PC-3 (cell line): ENCODE measurements at regions of chr1 and their contacts with region 1.

Region 1: DNA sequence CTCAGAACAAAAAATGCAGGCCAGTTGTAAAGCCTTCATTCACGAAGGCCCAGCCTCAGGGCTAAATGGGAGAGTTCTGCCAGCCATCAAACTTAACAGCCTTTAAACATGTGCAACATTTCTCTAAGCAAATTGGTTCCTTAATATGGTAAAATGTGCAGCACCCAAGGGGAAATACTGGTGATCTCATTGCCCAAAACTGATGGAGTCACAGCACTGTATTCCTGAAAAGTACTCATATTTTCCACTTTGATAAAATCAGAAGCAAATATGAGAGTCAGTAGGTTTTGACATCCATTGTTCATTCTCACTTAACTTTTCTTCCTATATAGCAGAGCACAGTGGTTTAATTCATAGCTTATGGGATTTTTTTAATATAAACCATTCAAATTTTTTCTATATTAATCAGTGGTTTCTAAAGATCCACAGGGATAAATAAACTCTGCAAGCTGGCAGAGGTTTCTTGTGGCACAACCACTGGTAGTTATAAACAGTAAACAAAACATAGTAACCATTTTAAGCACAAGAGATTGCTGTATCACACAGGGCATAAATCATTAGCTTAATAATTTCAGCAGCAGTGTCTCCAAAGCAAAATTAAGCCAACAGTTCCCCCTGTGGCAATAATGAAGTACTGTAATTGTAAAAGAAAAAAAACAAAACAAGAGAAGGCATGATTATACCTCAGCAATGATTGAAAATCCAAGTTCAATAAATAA is 106.9 kb upstream of the LYPLAL1 start:
- DNase-seq: peak; percentile 88
- ATAC-seq: peak; percentile 84
- H3K4me3 ChIP-seq: no peak overlapping the region
- H3K27ac ChIP-seq: peak overlapping the region; percentile 61
- H3K4me1 ChIP-seq: peaks cover 17% of the 10 kb centered on the region
- H3K27me3 ChIP-seq: no peaks in the 10 kb centered on the region
- CTCF ChIP-seq: peak; percentile 97

Region 2: GRCh38 chr1:218339267-218339831 is 727.4 kb before region 1 on chr1:
- CTCF ChIA-PET with region 1: interaction called, 14 read pairs
- POLR2A ChIA-PET with region 1: no interaction called
- intact Hi-C with region 1: loop called (anchors 1 kb)
- DNase-seq: peak; percentile 88
- ATAC-seq: peak; percentile 63
- H3K4me3 ChIP-seq: no peak overlapping the region
- H3K27ac ChIP-seq: peak overlapping the region; percentile 6
- H3K4me1 ChIP-seq: peaks cover 18% of the 10 kb centered on the region
- H3K27me3 ChIP-seq: no peaks in the 10 kb centered on the region
- CTCF ChIP-seq: peak; percentile 98

Region 3: DNA sequence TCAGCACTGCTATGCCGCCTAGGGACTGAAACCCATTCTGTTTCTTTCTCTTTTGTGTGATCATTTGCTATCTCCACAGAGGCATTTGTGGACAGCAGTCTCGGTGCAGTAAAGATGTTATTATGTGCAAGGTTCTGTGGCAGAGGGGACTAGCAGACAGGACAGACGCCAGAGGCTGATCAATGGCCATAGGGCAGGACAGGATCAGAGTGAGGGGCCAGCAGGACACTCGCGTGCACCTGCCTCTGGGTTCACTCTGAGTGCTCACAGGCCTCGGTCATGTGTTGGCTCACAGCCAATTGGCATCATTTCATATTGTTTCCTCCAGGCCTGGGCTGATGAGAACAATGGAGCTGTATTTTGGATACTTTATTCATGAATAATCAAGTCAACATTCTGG is 509.1 kb before region 1 on chr1:
- CTCF ChIA-PET with region 1: no interaction called
- POLR2A ChIA-PET with region 1: no interaction called
- intact Hi-C with region 1: loop called (anchors 2 kb)
- DNase-seq: peak; percentile 93
- ATAC-seq: peak; percentile 83
- H3K4me3 ChIP-seq: no peak overlapping the region
- H3K27ac ChIP-seq: no peak overlapping the region
- H3K4me1 ChIP-seq: peaks cover 11% of the 10 kb centered on the region
- H3K27me3 ChIP-seq: no peaks in the 10 kb centered on the region
- CTCF ChIP-seq: no peak

Region 4: GRCh38 chr1:218705911-218706893 is 360.6 kb before region 1 on chr1:
- CTCF ChIA-PET with region 1: interaction called, 13 read pairs
- POLR2A ChIA-PET with region 1: no interaction called
- intact Hi-C with region 1: loop called (anchors 1 kb)
- DNase-seq: peak; percentile 100
- ATAC-seq: peak; percentile 85
- H3K4me3 ChIP-seq: no peak overlapping the region
- H3K27ac ChIP-seq: peak overlapping the region; percentile 88
- H3K4me1 ChIP-seq: peaks cover 42% of the 10 kb centered on the region
- H3K27me3 ChIP-seq: no peaks in the 10 kb centered on the region
- CTCF ChIP-seq: no peak

Region 5: DNA sequence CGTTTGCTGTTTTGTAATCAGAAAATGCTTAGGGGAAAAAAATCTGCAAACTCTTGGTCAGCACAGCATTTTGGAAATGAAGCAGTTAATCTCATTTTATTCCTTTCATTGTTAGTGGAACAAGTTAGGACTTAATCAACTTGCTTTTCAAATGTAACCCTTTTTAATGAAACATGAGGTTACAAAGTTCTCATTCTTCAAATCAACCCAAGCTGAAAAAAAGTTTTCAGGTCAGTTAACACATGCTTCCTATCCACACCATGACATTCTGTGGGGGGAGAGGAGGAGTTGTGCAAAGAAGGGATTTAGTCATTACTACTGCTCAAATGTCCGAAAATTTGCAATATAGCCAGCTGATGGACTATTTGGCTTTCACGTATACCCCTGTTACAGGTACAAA is 176.3 kb before region 1 on chr1:
- CTCF ChIA-PET with region 1: interaction called, 4 read pairs
- POLR2A ChIA-PET with region 1: no interaction called
- intact Hi-C with region 1: loop called (anchors 2 kb)
- DNase-seq: no peak
- ATAC-seq: no peak
- H3K4me3 ChIP-seq: no peak overlapping the region
- H3K27ac ChIP-seq: no peak overlapping the region
- H3K4me1 ChIP-seq: peaks cover 54% of the 10 kb centered on the region
- H3K27me3 ChIP-seq: no peaks in the 10 kb centered on the region
- CTCF ChIP-seq: no peak

Region 6: GRCh38 chr1:219317762-219318353 is 251.1 kb after region 1 on chr1:
- CTCF ChIA-PET with region 1: no interaction called
- POLR2A ChIA-PET with region 1: no interaction called
- intact Hi-C with region 1: loop called (anchors 10 kb)
- DNase-seq: peak; percentile 82
- ATAC-seq: peak; percentile 59
- H3K4me3 ChIP-seq: no peak overlapping the region
- H3K27ac ChIP-seq: no peak overlapping the region
- H3K4me1 ChIP-seq: peaks cover 16% of the 10 kb centered on the region
- H3K27me3 ChIP-seq: no peaks in the 10 kb centered on the region
- CTCF ChIP-seq: peak; percentile 98

Region 7: GRCh38 chr1:219812491-219813203 is 745.9 kb after region 1 on chr1:
- CTCF ChIA-PET with region 1: interaction called, 3 read pairs
- POLR2A ChIA-PET with region 1: no interaction called
- intact Hi-C with region 1: loop called (anchors 5 kb)
- DNase-seq: peak; percentile 98
- ATAC-seq: peak; percentile 91
- H3K4me3 ChIP-seq: no peak overlapping the region
- H3K27ac ChIP-seq: no peak overlapping the region
- H3K4me1 ChIP-seq: peaks cover 15% of the 10 kb centered on the region
- H3K27me3 ChIP-seq: peaks cover 44% of the 10 kb centered on the region
- CTCF ChIP-seq: peak; percentile 100